ENCODE measurements at regions of chr4 and their contacts with region 1.

Region 1: DNA sequence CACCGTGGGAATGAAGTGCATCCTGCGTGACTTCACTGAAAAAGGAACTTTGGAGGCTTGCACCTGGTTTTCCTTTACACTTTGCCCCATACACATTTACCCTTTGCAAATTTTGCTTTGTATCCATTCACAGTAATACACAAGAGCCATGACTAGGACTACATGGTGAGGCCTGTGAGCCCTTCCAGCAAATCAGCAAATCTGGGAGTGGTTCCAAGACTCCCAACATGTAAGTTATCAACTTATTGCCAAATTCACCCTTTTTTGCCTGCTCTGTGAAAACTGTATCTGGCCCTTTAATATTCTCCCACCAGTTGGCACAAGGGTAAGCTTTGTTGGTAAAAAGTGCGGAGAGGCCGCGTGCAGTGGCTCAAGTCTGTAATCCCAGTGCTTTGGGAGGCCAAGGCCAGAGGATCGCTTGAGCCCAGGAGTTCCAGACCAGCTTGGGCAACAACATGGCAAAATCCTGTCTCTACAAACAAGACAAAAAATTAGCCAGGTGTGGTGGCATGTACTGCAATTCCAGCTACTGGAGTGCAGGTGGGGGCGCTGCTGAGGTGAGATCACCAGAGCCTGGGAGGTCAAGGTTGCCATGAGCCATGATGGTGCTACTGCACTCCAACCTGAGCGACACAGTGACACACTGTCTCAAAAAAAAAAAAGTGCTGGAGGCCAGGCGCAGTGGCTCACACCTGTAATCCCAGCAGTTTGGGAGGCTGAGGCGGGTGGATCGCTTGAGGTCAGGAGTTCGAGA is 5.0 kb downstream of the PRMT9 start:
- DNase-seq: no peak
- H3K4me3 ChIP-seq: no peak overlapping the region
- H3K27ac ChIP-seq: no peak overlapping the region
- H3K4me1 ChIP-seq: peaks cover 8% of the 10 kb centered on the region; the same call in 1 of the 2 replicates
- H3K27me3 ChIP-seq: no peaks in the 10 kb centered on the region
- CTCF ChIP-seq: no peak; the same call in 1 of the 2 replicates

Region 2: GRCh38 chr4:147530723-147531122 is 148.2 kb before region 1 on chr4:
- CTCF ChIA-PET with region 1: no interaction called
- POLR2A ChIA-PET with region 1: no interaction called
- intact Hi-C with region 1: no loop called
- DNase-seq: no peak
- H3K4me3 ChIP-seq: no peak overlapping the region
- H3K27ac ChIP-seq: no peak overlapping the region
- H3K4me1 ChIP-seq: no peaks in the 10 kb centered on the region
- H3K27me3 ChIP-seq: no peaks in the 10 kb centered on the region
- CTCF ChIP-seq: no peak

Region 3: GRCh38 chr4:147843162-147843561 is 164.2 kb after region 1 on chr4:
- CTCF ChIA-PET with region 1: interaction called, 13 read pairs
- POLR2A ChIA-PET with region 1: no interaction called
- intact Hi-C with region 1: no loop called
- DNase-seq: no peak
- H3K4me3 ChIP-seq: no peak overlapping the region
- H3K27ac ChIP-seq: no peak overlapping the region
- H3K4me1 ChIP-seq: no peaks in the 10 kb centered on the region
- H3K27me3 ChIP-seq: no peaks in the 10 kb centered on the region
- CTCF ChIP-seq: no peak

Region 4: DNA sequence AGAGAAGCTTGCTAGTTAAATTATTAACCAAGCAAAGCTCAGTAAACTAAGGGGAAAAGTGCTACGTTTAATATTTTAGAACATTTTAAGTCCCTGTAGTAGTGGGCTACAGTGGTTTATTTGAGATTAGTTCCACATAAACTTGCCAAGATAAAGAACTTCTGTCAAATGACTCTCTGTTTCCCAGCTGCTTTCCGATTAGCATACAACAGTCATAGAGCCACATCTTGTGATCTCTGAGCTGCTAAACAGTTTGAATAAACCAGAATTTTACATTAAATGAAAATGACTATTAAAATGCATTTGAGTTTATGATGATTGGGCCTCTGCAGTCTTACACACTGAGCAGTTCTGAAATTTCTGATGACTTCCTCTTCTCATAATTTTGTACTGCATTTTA is 1568.2 kb after region 1 on chr4:
- CTCF ChIA-PET with region 1: no interaction called
- POLR2A ChIA-PET with region 1: no interaction called
- intact Hi-C with region 1: no loop called
- DNase-seq: no peak
- H3K4me3 ChIP-seq: no peak overlapping the region
- H3K27ac ChIP-seq: no peak overlapping the region
- H3K4me1 ChIP-seq: no peaks in the 10 kb centered on the region
- H3K27me3 ChIP-seq: no peaks in the 10 kb centered on the region
- CTCF ChIP-seq: no peak